Naive thymus-derived CD4-positive, alpha-beta T cell (primary cell): ENCODE measurements at regions of chr6 and their contacts with region 1.

Region 1: DNA sequence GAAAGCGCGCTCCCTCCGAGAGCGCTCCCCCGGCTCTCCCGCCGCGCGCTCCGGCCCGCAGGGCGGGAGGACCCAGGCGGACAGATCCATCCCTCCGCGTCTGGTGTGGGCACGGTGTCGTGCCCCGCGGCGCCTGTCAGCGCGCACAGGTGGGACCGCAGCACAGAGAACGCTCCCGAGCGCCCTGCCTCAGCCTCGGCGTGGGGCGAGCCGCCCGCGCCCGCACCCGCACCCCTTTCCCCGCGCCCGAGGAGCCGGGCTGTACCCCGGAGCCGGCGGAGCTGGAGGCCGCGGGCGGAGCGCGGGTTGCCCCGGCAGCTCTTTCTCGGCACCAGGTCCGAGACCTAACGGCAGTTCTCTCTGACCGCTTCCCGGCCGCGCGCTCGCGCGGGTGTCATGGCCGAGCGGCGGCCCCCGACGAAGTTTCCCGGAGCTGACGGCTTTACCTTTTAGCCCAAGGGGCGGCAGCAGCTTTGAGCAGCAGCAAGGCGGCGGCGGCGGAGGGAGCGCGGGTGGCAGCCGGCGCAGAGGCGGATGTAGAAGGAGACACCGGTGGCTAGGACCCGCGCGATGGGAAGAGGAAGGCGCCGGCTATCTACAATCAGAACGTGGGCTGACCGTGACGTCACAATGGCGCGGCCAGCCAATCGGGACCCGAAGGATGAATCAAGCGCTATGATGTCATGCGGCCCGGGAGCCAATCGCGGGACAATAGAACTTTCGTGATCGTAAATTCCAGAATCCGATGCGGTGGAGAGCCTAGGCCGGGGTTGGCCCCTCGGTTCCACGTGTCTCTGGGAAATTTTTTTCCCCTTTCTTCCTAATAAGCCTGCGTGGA is at the start of gene ELOVL5:
- DNase-seq: peak; percentile 78 to 97 (median 87)
- ATAC-seq: peak; percentile 87
- H3K4me3 ChIP-seq: peak within 1 kb of the TSS; percentile 65
- H3K4me3 Mint-ChIP-seq: peak within 1 kb of the TSS; percentile 91 to 100 (median 98)
- H3K27ac ChIP-seq: peak within 1 kb of the TSS; percentile 89
- H3K27ac Mint-ChIP-seq: peak within 1 kb of the TSS; percentile 85 to 99 (median 96)
- H3K4me1 ChIP-seq: peaks cover 23 to 30% of the 10 kb centered on the region in 2 donors
- H3K4me1 Mint-ChIP-seq: peaks cover 34 to 48% (median 46%) of the 10 kb centered on the region in 7 donors
- H3K27me3 ChIP-seq: no peaks in the 10 kb centered on the region
- H3K27me3 Mint-ChIP-seq: peaks cover 0 to 18% (median 0%) of the 10 kb centered on the region in 5 donors
- total RNA-seq, gene ELOVL5: 49.7 to 124 (median 71.3) TPM

Region 2: DNA sequence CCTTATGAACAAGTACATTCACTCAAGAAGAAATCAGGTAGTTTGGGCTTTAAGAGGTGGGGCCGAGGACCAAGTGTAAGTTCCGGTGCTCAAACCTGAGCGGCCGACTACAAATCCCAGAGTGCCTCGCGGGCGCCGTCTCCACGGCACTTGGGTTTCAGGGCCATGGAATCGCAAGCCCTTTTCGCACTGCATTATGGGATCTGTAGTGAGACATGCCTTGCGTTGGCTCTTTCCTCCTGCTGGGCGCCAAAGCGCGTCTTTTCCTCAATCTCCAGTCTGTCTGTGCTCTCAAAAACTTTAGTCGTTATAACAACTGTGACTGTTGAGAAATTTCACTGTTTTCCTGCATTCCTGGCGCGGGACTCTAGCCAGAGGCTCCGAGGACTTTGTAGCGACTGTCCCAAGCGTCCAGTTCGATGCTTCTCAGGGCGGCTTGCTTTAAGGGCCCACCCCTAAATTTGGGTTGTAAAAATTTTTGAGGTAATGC is 283.8 kb before region 1 on chr6:
- CTCF ChIA-PET with region 1: no interaction called
- POLR2A ChIA-PET with region 1: no interaction called
- intact Hi-C with region 1: loop called (anchors 2 kb)
- DNase-seq: peak; percentile 81 to 98 (median 94)
- ATAC-seq: peak; percentile 91
- H3K4me3 ChIP-seq: peak overlapping the region; percentile 95
- H3K4me3 Mint-ChIP-seq: peak overlapping the region; percentile 86 to 100 (median 99)
- H3K27ac ChIP-seq: peak overlapping the region; percentile 78
- H3K27ac Mint-ChIP-seq: peak overlapping the region; percentile 90 to 99 (median 97)
- H3K4me1 ChIP-seq: peaks cover 22% of the 10 kb centered on the region in 2 donors
- H3K4me1 Mint-ChIP-seq: peaks cover 36 to 68% (median 56%) of the 10 kb centered on the region in 7 donors
- H3K27me3 ChIP-seq: no peaks in the 10 kb centered on the region
- H3K27me3 Mint-ChIP-seq: no peaks in the 10 kb centered on the region

Region 3: DNA sequence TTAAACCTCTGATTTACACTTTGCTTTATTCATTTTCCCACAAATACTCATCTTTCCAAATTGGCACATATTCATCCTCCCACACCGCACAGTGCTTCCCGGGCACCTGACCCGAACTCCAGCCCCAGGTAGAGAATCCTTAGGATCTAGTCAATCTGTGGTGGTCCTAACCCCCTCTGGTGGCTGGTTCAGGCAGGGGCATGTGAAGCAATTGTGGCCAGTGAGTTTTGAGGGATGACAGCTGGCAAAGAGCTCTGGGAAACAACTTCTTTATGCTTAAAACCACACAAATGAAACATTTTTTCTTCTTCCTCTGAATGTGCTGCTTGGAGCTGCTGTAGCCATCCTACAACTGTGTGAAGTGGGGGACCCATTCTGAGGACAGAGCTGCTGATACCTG is 54.5 kb before region 1 on chr6:
- CTCF ChIA-PET with region 1: interaction called, 5 read pairs
- POLR2A ChIA-PET with region 1: interaction called, 27 read pairs
- intact Hi-C with region 1: loop called in 1 of 2 experiments (anchors 1 kb)
- DNase-seq: peak in 1 of 9 donors; percentile 7
- ATAC-seq: no peak
- H3K4me3 ChIP-seq: no peak overlapping the region
- H3K4me3 Mint-ChIP-seq: peak overlapping the region in 1 of 10 donors; percentile 10
- H3K27ac ChIP-seq: no peak overlapping the region
- H3K27ac Mint-ChIP-seq: peak overlapping the region in 8 of 9 donors; percentile 41 to 86 (median 74)
- H3K4me1 ChIP-seq: peaks cover 35 to 41% of the 10 kb centered on the region in 2 donors
- H3K4me1 Mint-ChIP-seq: peaks cover 46 to 94% (median 83%) of the 10 kb centered on the region in 7 donors
- H3K27me3 ChIP-seq: no peaks in the 10 kb centered on the region
- H3K27me3 Mint-ChIP-seq: no peaks in the 10 kb centered on the region

Region 4: GRCh38 chr6:53335208-53335994 is 13.2 kb before region 1 on chr6:
- CTCF ChIA-PET with region 1: interaction called, 13 read pairs
- POLR2A ChIA-PET with region 1: interaction called, 126 read pairs
- intact Hi-C with region 1: loop called (anchors 1 kb)
- DNase-seq: peak; percentile 47 to 87 (median 75)
- ATAC-seq: peak; percentile 85
- H3K4me3 ChIP-seq: peak overlapping the region; percentile 50
- H3K4me3 Mint-ChIP-seq: peak overlapping the region; percentile 83 to 95 (median 88)
- H3K27ac ChIP-seq: peak overlapping the region; percentile 88
- H3K27ac Mint-ChIP-seq: peak overlapping the region; percentile 98 to 100 (median 99)
- H3K4me1 ChIP-seq: peaks cover 72 to 74% of the 10 kb centered on the region in 2 donors
- H3K4me1 Mint-ChIP-seq: peaks cover 54 to 95% (median 92%) of the 10 kb centered on the region in 7 donors
- H3K27me3 ChIP-seq: no peaks in the 10 kb centered on the region
- H3K27me3 Mint-ChIP-seq: no peaks in the 10 kb centered on the region

Region 5: DNA sequence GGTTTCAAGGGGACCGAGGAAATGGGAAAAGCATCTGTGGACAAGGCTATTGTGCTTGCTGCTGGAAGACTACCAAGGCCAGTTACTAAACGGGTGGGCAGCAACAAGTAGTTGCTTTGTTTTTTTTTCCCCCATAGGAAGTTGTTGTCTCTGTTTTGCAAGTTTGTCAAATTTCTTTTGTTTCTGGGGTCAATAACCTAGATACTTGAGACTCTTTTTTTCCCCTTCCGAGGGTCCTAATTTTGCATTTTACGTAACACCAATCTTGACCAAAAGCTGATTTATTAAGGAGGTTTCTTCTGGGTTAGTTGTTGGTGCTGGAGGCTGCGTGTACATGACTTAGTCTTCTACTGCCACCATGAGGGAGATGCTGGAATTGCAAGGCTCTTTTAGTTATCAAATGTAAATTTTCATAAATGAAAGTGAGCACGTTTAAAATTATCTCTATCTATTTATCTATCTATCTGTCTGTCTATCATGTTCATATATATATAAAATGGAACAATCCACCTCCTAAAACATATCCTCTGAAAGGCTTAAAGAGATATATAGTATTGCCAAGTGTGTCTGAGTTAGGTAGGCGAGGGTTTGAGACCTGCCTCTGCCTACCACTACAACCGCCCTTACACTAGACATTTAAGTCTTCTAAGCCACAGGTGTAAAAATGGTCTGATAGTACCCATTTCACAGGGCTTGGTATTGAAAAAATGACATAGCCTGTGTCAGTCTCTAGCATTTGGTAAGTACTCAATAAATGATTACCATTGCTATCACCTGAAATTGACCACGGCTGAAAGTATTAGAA is 136.1 kb after region 1 on chr6:
- CTCF ChIA-PET with region 1: interaction called, 3 read pairs
- POLR2A ChIA-PET with region 1: no interaction called
- intact Hi-C with region 1: loop called in 1 of 2 experiments (anchors 5 kb)
- DNase-seq: peak; percentile 28 to 74 (median 60)
- ATAC-seq: peak; percentile 86
- H3K4me3 ChIP-seq: no peak overlapping the region
- H3K4me3 Mint-ChIP-seq: no peak overlapping the region
- H3K27ac ChIP-seq: no peak overlapping the region
- H3K27ac Mint-ChIP-seq: no peak overlapping the region
- H3K4me1 ChIP-seq: no peaks in the 10 kb centered on the region
- H3K4me1 Mint-ChIP-seq: peaks cover 0 to 19% (median 0%) of the 10 kb centered on the region in 7 donors
- H3K27me3 ChIP-seq: no peaks in the 10 kb centered on the region
- H3K27me3 Mint-ChIP-seq: peaks cover 20 to 34% (median 25%) of the 10 kb centered on the region in 5 donors

Region 6: DNA sequence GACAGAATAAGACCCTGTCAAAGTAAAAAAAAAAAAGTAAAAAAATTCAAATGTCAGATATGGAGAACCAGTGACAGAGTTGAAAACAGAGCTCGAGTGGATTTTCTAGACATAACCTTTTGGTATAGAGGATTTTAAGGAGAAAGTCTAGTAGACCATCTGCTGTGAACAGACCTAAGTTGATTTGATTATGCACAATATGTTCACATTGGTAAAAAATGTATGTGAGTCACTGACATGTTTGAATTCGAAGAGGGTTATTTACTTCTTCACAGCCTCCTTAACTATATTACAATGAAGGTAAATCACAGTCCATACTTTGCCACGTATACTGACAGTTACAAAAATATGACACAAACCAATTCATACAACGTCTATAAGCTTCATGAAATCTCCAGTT is 967.1 kb after region 1 on chr6:
- CTCF ChIA-PET with region 1: no interaction called
- POLR2A ChIA-PET with region 1: no interaction called
- intact Hi-C with region 1: no loop called
- DNase-seq: no peak
- ATAC-seq: no peak
- H3K4me3 ChIP-seq: no peak overlapping the region
- H3K4me3 Mint-ChIP-seq: no peak overlapping the region
- H3K27ac ChIP-seq: no peak overlapping the region
- H3K27ac Mint-ChIP-seq: no peak overlapping the region
- H3K4me1 ChIP-seq: no peaks in the 10 kb centered on the region
- H3K4me1 Mint-ChIP-seq: no peaks in the 10 kb centered on the region
- H3K27me3 ChIP-seq: no peaks in the 10 kb centered on the region
- H3K27me3 Mint-ChIP-seq: no peaks in the 10 kb centered on the region